SK-N-SH (cell line): ENCODE measurements at regions of chr1 and their contacts with region 1.

Region 1: DNA sequence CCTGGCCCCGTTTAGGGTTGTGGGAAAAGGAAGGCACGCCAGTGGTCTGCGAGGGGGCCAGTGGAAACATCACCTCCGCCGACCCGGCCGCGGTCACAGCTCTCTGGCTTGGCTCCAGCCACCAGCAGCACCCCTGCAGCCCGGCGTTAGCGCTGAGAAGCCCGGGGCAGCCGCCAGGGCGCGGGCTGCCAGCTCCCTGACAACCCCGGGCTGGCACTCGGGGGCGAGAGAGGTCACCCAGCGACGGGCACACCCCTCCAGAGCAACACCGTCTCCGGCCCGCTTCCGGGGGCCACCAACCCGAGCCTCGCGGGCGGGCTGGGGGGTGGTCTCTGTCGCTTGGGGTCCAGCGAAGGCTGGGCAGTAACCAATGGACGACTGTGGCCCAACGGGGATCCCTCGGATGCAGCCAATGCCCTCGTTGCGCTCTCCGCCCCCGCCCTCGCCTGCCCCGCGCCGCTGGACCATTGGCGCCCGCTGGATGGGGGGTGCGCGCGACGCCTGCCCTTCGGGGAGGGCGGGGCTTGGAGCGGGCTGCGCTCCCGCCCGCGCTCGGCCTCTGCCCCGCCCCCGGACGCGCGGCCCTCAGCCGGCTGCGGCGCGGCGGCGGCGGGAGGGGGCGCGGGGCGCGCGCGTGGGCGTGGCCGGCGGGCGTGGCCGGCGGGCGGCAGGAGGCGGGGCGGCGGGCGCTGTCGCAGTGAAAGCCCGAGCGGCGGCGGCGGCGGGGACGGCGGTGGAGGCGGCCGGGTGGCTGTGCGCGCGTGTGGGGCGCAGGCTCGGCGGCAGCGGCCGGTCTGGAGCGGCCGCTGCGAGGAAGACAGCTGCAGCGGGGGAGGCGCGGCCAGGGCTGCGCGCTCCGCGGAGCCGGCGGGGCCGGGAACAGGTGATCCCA is at the start of gene MAN1C1:
- DNase-seq: peak; percentile 99
- H3K4me3 ChIP-seq: peak within 1 kb of the TSS; percentile 70 to 73
- H3K27ac ChIP-seq: peak within 1 kb of the TSS in 1 of 2 experiments; percentile 81; a peak in 2 of 4 replicates
- H3K4me1 ChIP-seq: peaks cover 0 to 33% of the 10 kb centered on the region in 2 experiments; a peak in 2 of 4 replicates
- H3K27me3 ChIP-seq: peaks cover 41% of the 10 kb centered on the region
- CTCF ChIP-seq: peak; percentile 50
- EP300 ChIP-seq: 0 out of 4 replicates have a peak, but pooled peaks of 1 of the 2 experiments have one; percentile 7
- RAD21 ChIP-seq: no peak
- polyA plus RNA-seq, gene MAN1C1: 0.20 and 0.26 TPM in 2 replicates

Region 2: DNA sequence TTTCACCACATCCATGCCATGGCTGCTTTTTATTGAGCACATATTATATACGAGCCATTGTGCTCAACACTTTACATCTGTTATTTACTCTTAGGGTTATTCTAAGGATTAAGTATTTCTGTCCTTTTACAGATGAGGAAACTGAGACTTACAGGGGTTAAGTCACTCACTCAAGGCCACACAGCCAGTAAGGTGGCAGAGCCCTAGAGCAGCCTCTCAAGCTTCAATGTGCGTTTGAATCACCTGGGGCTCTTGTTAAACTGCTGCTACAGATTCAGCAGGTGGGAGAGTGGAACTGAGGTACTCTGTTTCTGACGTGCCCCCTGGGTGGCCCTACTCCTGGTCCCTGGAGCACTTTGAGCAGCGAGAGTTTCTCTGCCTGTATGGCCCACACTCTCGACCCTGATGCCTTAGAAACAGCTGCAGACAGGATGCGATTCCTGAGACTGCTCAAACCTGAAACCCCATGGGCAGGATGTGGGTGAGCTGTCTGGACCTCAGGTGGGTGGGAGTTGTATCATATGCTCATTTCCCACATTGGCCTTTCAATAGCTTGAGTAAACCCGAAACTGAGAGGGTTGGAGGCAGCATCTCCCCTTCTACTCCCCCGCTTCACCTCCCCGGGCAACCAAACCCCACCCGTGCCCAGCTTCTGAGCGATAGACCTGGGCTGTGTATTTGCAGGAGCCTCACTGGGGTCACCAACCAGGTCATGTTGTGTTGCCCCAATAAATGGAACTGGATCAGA is 59.6 kb after region 1 on chr1:
- CTCF ChIA-PET with region 1: interaction called, 11 read pairs
- POLR2A ChIA-PET with region 1: no interaction called
- DNase-seq: no peak
- H3K4me3 ChIP-seq: no peak overlapping the region
- H3K27ac ChIP-seq: no peak overlapping the region
- H3K4me1 ChIP-seq: no peaks in the 10 kb centered on the region
- H3K27me3 ChIP-seq: peaks cover 21% of the 10 kb centered on the region; the same call in 1 of the 2 replicates
- CTCF ChIP-seq: no peak
- EP300 ChIP-seq: no peak
- RAD21 ChIP-seq: no peak

Region 3: GRCh38 chr1:25707280-25708016 is 91.1 kb after region 1 on chr1:
- CTCF ChIA-PET with region 1: interaction called, 11 read pairs
- POLR2A ChIA-PET with region 1: no interaction called
- DNase-seq: peak; percentile 80
- H3K4me3 ChIP-seq: no peak overlapping the region
- H3K27ac ChIP-seq: peak overlapping the region; percentile 39 to 92; a peak in 3 of 4 replicates
- H3K4me1 ChIP-seq: peaks cover 18 to 50% of the 10 kb centered on the region in 2 experiments
- H3K27me3 ChIP-seq: no peaks in the 10 kb centered on the region
- CTCF ChIP-seq: no peak
- EP300 ChIP-seq: peak in 1 of 2 experiments; percentile 86; a peak in 2 of 4 replicates
- RAD21 ChIP-seq: peak; percentile 16

Region 4: GRCh38 chr1:25737130-25737529 is 120.8 kb after region 1 on chr1:
- CTCF ChIA-PET with region 1: interaction called, 25 read pairs
- POLR2A ChIA-PET with region 1: no interaction called
- DNase-seq: no peak
- H3K4me3 ChIP-seq: no peak overlapping the region
- H3K27ac ChIP-seq: no peak overlapping the region
- H3K4me1 ChIP-seq: peaks cover 0 to 25% of the 10 kb centered on the region in 2 experiments; a peak in 1 of 4 replicates
- H3K27me3 ChIP-seq: 0 out of 2 replicates have a peak, but pooled peaks cover 6% of the 10 kb centered on the region
- CTCF ChIP-seq: no peak
- EP300 ChIP-seq: no peak
- RAD21 ChIP-seq: no peak

Region 5: DNA sequence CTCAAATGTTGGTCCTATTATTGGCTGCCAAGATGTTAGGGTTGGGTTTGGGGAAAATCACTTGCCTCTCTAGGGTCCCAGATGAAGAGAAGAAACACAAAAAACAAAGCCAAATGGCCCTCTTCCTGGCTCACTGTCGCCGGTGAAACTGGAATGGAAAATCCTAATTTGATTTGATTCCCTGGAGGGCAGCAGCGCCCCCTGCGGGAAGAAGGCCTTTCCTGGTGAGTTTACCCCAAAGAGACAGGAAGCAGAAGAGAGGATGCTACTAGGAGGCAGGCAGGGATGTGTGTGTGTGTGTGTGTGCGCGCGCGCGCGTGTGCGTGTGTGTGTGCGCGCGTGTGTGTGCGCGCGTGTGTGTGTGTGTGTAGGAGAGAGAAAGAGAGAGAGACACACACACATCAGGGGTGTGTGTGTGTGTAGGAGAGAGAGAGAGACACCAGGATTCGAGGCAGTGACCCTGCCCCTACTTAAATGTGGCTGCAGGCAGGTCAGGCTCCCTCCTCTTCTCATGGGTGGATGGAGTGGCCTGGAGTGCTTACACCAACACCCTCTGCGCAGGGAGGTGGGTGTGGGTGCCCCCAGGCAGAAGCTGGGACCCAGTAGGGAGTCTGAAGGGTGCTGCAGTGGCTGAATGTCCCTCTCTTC is 180.6 kb after region 1 on chr1:
- CTCF ChIA-PET with region 1: interaction called, 26 read pairs
- POLR2A ChIA-PET with region 1: no interaction called
- DNase-seq: peak; percentile 71
- H3K4me3 ChIP-seq: peak overlapping the region in 1 of 2 experiments; percentile 26; a peak in 1 of 4 replicates
- H3K27ac ChIP-seq: no peak overlapping the region
- H3K4me1 ChIP-seq: peaks cover 0 to 27% of the 10 kb centered on the region in 2 experiments; a peak in 2 of 4 replicates
- H3K27me3 ChIP-seq: no peaks in the 10 kb centered on the region
- CTCF ChIP-seq: peak; percentile 78
- EP300 ChIP-seq: no peak
- RAD21 ChIP-seq: peak; percentile 74